ENCODE measurements at regions of chr5 and their contacts with region 1.

Region 1: DNA sequence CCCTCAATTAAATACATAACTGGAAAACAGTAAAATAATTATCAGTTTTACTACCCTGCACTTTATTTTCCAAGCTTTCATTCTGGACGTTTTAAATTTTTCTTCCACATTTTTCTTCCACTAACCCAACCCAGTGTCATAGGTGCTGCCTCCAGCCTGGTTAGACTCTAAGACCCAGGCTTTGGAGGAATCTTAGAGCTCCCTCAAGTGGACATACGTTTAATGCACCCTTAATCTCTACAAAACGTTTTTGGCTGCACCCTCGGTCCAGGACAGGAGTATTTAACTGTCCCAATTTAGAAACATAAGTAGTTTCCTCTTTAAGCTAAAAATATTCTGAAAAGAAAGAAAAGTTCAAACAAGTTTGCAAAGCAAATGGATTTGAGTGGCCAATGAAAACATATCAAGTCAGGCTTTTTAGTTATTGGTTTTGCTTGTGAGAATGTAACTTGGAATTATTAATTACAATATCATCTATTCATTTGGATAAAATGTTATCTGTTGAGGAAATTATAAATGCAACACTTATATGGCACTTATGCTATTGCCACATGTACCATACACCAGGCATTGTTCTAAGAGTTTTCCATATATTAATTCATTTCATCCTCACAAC is 38.9 kb downstream of the CDH6 start:
- H3K4me3 Mint-ChIP-seq: no peak overlapping the region
- H3K27ac Mint-ChIP-seq: no peak overlapping the region
- H3K4me1 Mint-ChIP-seq: no peaks in the 10 kb centered on the region
- H3K27me3 Mint-ChIP-seq: no peaks in the 10 kb centered on the region

Region 2: GRCh38 chr5:30040488-30041118 is 1191.8 kb before region 1 on chr5:
- intact Hi-C with region 1: loop called (anchors 5 kb)
- H3K4me3 Mint-ChIP-seq: no peak overlapping the region
- H3K27ac Mint-ChIP-seq: no peak overlapping the region
- H3K4me1 Mint-ChIP-seq: no peaks in the 10 kb centered on the region
- H3K27me3 Mint-ChIP-seq: no peaks in the 10 kb centered on the region

Region 3: DNA sequence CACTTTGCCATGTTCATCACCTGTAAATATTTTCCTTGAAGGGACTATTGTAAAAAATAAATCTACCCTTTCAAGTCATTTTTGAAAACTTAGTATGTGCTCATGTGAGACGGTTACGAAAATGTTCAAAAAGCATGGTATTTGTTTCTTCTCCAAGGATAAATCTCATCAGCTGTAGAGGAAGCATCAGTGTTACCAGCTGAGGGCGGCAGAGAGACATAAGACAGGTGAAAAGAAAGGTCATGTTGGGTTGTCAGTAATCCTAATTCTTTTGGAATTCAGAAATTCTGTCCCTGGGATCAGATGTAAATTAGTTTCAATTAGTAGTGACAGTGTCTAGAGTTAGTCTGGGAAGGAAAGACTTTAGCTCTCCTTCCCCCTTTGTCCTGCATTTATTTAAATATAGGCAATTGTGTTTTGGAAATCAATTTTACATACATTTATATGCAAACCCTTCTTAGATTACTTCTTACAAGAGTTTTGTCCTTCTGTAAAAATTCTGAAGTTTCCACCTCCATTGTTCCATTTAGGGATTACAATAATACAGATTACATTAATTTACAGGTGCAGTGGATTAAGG is 830.8 kb before region 1 on chr5:
- intact Hi-C with region 1: loop called (anchors 2 kb)
- H3K4me3 Mint-ChIP-seq: no peak overlapping the region
- H3K27ac Mint-ChIP-seq: no peak overlapping the region
- H3K4me1 Mint-ChIP-seq: no peaks in the 10 kb centered on the region
- H3K27me3 Mint-ChIP-seq: no peaks in the 10 kb centered on the region